PC-3 (cell line): ENCODE measurements at regions of chr7 and their contacts with region 1.

Region 1: GRCh38 chr7:20598459-20599309 is 16.8 kb upstream of the ABCB5 start:
- DNase-seq: peak; percentile 84
- ATAC-seq: peak; percentile 83
- H3K4me3 ChIP-seq: peak overlapping the region; percentile 69
- H3K27ac ChIP-seq: peak overlapping the region; percentile 87
- H3K4me1 ChIP-seq: peaks cover 27% of the 10 kb centered on the region
- H3K27me3 ChIP-seq: no peaks in the 10 kb centered on the region
- CTCF ChIP-seq: peak; percentile 93

Region 2: DNA sequence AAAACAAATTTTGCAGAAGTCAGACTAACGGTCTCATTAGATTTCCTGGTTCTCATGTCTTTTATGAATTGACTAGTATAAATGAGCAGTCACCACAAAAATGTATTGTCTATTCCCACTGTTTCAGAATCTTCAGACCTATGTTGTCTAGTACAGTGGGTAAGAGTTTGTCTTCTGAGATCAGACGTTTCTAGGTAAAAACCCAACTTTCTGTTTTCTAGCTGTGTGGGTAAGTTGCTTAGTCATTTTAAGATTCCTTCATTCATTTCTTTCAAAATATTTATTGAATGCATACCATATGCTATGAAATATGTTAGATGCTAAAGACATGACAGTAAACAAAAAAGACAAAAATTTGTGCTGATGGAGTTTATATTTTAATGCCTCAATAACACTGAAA is 1046.1 kb before region 1 on chr7:
- CTCF ChIA-PET with region 1: no interaction called
- POLR2A ChIA-PET with region 1: no interaction called
- intact Hi-C with region 1: no loop called
- DNase-seq: no peak
- ATAC-seq: no peak
- H3K4me3 ChIP-seq: no peak overlapping the region
- H3K27ac ChIP-seq: no peak overlapping the region
- H3K4me1 ChIP-seq: 0 out of 2 replicates have a peak, but pooled peaks cover 1% of the 10 kb centered on the region
- H3K27me3 ChIP-seq: no peaks in the 10 kb centered on the region
- CTCF ChIP-seq: no peak

Region 3: DNA sequence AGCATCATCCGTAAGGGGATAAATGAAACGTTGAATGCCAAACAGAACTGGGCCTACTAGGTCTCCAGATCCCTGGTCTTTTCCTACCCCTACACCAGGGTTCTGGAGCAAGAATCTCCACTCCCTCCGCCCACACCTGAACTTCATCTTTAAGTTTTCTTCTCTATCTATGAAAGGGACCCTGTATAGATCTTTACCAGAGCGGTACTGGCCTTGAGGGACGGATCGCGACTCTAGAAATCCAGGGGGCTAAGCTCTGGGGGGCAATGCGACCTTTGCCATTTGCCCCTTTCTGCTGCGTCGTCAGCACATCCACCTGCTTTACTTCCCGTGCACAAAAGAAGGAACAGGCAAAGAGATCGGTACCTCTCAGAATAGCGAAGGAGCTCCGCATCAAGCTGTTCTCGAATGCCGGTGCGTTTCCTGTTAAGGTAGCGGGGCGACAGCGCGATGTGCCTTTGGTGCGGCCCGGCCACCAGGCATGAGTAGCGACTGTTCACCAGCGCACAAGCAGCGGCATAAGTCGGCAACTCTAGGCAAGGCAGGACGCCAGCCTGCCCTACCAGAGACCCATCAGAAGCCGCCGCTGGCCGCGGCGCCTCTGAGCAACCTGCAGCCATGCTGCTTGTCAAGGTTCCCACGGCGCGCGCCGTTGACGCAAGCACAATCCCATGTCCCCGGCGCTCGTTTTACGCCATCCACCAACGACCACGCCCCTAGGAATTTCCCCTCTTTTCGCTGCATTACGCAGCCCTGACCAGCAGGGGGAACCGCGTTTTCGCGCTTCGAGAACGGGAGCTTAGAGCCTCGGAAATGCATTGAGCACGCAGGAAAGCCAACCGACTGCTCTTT is 890.1 kb before region 1 on chr7 and contains the start of gene POLR1F:
- CTCF ChIA-PET with region 1: interaction called, 75 read pairs
- POLR2A ChIA-PET with region 1: no interaction called
- intact Hi-C with region 1: loop called (anchors 1 kb)
- DNase-seq: peak; percentile 98
- ATAC-seq: peak; percentile 90
- H3K4me3 ChIP-seq: peak within 1 kb of the TSS; percentile 98
- H3K27ac ChIP-seq: peak within 1 kb of the TSS; percentile 8; the same call in 1 of the 2 replicates
- H3K4me1 ChIP-seq: peaks cover 24% of the 10 kb centered on the region
- H3K27me3 ChIP-seq: no peaks in the 10 kb centered on the region
- CTCF ChIP-seq: peak; percentile 82
- total RNA-seq, gene POLR1F: 19.8 and 22.3 TPM in 2 replicates

Region 4: GRCh38 chr7:19958309-19958896 is 640.3 kb before region 1 on chr7:
- CTCF ChIA-PET with region 1: no interaction called
- POLR2A ChIA-PET with region 1: interaction called, 3 read pairs
- intact Hi-C with region 1: loop called (anchors 2 kb)
- DNase-seq: peak; percentile 98
- ATAC-seq: peak; percentile 92
- H3K4me3 ChIP-seq: no peak overlapping the region
- H3K27ac ChIP-seq: peak overlapping the region; percentile 99
- H3K4me1 ChIP-seq: peaks cover 19% of the 10 kb centered on the region
- H3K27me3 ChIP-seq: no peaks in the 10 kb centered on the region
- CTCF ChIP-seq: no peak

Region 5: DNA sequence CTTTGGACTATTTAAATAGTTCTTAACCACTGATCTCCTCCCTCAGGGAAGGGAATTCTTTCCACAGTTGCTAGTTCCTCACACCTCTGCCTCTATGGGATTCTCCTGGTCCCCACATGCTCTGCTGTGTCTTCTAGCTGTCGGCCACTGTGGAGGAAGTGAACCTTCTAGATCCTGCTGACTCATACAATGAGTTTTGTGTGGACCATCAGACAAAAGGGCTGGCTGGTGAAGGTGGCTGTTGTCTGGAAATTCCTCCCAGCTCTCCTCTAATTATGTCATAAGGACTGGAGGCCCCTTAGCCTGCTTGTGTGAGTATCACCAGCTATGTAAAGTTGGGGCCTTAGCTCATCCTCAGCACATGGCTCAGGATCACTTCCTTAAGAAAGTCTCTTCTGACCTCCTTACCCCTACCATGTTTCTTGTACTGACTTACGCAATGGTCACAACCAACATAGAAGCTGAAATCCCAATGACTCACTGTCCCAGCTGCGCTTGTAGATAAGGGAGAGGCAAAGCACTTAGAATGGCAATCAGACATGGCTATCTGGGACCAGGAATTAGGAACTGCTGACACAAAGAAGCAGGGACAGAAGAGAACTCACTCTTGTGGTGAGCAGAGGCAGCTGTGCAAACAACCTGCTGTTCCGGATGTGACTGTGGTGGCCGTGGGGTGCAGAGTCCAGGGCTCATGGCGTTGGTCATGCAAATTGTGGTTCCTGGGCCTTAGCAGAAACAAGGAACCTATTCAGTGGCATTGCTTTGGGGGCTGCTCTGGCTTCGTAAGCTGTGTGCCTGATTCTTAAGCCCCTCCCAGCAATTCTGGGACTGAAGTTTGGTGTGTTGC is 379.0 kb before region 1 on chr7:
- CTCF ChIA-PET with region 1: no interaction called
- POLR2A ChIA-PET with region 1: no interaction called
- intact Hi-C with region 1: loop called (anchors 1 kb)
- DNase-seq: peak; percentile 90
- ATAC-seq: peak; percentile 55
- H3K4me3 ChIP-seq: no peak overlapping the region
- H3K27ac ChIP-seq: peak overlapping the region; percentile 98
- H3K4me1 ChIP-seq: peaks cover 70% of the 10 kb centered on the region
- H3K27me3 ChIP-seq: no peaks in the 10 kb centered on the region
- CTCF ChIP-seq: no peak

Region 6: GRCh38 chr7:20352573-20353304 is 245.9 kb before region 1 on chr7:
- CTCF ChIA-PET with region 1: interaction called, 6 read pairs
- POLR2A ChIA-PET with region 1: no interaction called
- intact Hi-C with region 1: loop called (anchors 1 kb)
- DNase-seq: peak; percentile 97
- ATAC-seq: peak; percentile 94
- H3K4me3 ChIP-seq: peak overlapping the region; percentile 45
- H3K27ac ChIP-seq: peak overlapping the region; percentile 95
- H3K4me1 ChIP-seq: peaks cover 46% of the 10 kb centered on the region
- H3K27me3 ChIP-seq: no peaks in the 10 kb centered on the region
- CTCF ChIP-seq: no peak

Region 7: DNA sequence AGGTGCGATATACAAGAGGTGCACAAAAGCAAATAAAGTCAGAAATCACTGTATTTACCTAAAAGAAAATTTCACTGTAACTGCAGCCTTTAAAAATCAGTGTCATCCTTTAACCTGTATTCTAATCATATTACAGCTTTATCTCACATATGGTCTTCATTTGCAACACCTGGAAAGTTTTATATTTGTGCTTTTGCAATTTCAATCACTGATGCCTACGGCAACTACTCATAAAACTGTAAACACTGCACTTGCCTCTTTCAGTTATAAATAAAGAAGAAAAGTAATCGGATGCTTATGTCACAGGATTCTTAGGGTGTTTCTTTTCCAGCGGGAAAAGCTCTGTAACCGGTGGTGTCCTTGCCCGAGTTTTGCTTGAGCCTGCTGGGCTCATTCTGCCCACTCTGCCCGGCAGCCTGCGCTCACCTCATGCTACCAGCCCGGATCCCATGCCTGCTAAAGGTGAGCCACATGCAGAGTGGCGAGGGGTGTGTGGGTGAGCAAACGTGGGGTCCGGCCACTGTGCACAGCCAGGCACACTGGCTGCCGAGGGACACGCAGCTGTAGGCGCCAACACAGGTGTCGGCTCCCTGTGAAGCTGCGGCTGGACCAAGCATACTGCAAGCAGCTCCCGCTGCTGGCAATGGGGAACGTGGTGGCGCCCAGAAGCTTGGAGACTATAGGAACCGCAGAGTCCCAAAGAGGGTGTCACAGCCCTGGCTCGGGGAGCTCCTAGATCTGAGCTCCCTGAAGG is 39.5 kb before region 1 on chr7:
- CTCF ChIA-PET with region 1: no interaction called
- POLR2A ChIA-PET with region 1: no interaction called
- intact Hi-C with region 1: no loop called
- DNase-seq: no peak
- ATAC-seq: no peak
- H3K4me3 ChIP-seq: no peak overlapping the region
- H3K27ac ChIP-seq: no peak overlapping the region
- H3K4me1 ChIP-seq: peaks cover 29% of the 10 kb centered on the region
- H3K27me3 ChIP-seq: no peaks in the 10 kb centered on the region
- CTCF ChIP-seq: no peak

Region 8: GRCh38 chr7:20647908-20648776 is 49.5 kb after region 1 on chr7:
- CTCF ChIA-PET with region 1: interaction called, 5 read pairs
- POLR2A ChIA-PET with region 1: interaction called, 4 read pairs
- intact Hi-C with region 1: loop called (anchors 1 kb)
- DNase-seq: peak; percentile 70
- ATAC-seq: peak; percentile 95
- H3K4me3 ChIP-seq: no peak overlapping the region
- H3K27ac ChIP-seq: no peak overlapping the region
- H3K4me1 ChIP-seq: no peaks in the 10 kb centered on the region
- H3K27me3 ChIP-seq: peaks cover 10% of the 10 kb centered on the region
- CTCF ChIP-seq: peak; percentile 81